WTC11 (cell line): ENCODE measurements at regions of chr6 and their contacts with region 1.

Region 1: DNA sequence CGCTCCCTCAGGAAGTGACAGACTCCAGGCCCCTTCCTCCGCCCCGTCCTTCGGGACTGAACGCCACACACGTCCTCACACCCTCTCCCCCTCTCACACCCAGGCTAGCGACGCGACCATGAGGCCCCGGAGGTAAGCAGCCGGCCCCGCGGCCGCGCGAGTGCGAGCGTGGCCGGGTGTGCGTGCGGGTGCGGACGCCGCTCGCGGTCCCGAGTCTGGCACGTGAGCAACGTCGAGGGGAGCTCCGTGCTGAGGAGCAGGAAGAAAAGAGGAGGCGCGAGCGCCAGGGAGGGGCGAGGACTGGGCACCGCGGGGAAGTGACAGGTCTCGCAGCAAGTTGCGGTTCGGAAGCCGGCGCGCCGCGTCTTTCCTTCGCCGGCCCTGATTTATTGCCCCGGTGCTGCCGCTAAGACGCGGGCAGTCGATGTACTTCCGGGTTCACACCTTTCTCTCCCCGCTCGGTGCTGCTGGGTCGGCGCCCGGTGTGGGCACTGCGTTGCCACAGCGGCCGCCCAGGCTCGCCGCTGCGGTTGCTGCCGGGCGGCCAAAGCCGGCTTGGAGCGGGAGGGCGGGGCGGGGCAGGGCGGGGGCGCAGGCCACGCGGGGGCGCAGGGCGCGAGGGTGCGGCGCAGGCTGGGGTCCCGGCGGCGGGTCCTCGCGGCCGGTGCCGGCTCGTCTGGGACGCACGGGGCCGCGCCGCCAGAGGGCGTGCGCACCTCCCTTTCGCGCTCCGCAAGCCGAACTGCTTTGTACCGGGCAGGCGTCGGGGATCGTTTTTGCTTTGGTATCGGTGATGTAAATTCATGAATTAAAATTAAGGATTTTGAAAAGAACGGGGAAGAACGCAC is 15.8 kb upstream of the LIN28B start:
- DNase-seq: peak; percentile 79
- ATAC-seq: peak; percentile 75
- H3K4me3 Mint-ChIP-seq: peak overlapping the region; percentile 95
- H3K27ac Mint-ChIP-seq: peak overlapping the region; percentile 99
- H3K4me1 Mint-ChIP-seq: peaks cover 34% of the 10 kb centered on the region
- H3K27me3 Mint-ChIP-seq: no peaks in the 10 kb centered on the region
- CTCF ChIP-seq: peak; percentile 65

Region 2: GRCh38 chr6:104705095-104705707 is 235.9 kb before region 1 on chr6:
- CTCF ChIA-PET with region 1: no interaction called
- POLR2A ChIA-PET with region 1: no interaction called
- DNase-seq: no peak
- ATAC-seq: no peak
- H3K4me3 Mint-ChIP-seq: no peak overlapping the region
- H3K27ac Mint-ChIP-seq: no peak overlapping the region
- H3K4me1 Mint-ChIP-seq: peaks cover 9% of the 10 kb centered on the region; the same call in 1 of the 2 replicates
- H3K27me3 Mint-ChIP-seq: no peaks in the 10 kb centered on the region
- CTCF ChIP-seq: no peak

Region 3: DNA sequence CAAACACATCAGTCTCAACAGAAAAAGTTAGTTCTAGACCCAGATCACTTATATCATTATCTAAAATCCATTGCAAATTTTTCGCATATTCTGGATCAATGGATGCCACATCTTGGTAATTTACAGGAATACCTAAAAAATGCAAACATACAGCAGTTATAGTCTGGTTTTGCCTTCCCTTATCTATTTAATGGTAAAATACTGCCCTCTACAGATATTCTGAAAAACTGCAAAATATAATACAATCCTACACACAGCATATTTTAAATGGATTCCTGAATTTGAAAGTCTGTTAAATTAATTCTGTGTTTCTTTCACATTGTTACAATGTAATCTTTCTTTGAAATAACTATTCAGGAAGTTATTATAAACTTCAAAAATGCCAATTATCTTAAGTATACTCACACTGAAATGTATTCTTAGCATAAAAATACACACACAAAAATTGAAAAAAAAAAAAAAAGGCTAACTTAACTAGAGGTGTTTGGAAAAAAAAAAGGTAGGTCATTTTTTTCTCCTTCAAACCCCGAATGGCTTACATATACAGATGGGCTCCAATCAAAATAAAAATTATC is 169.8 kb before region 1 on chr6:
- CTCF ChIA-PET with region 1: no interaction called
- POLR2A ChIA-PET with region 1: no interaction called
- DNase-seq: no peak
- ATAC-seq: peak; percentile 71
- H3K4me3 Mint-ChIP-seq: no peak overlapping the region
- H3K27ac Mint-ChIP-seq: no peak overlapping the region
- H3K4me1 Mint-ChIP-seq: peaks cover 7% of the 10 kb centered on the region
- H3K27me3 Mint-ChIP-seq: no peaks in the 10 kb centered on the region
- CTCF ChIP-seq: peak; percentile 56

Region 4: GRCh38 chr6:104829183-104829958 is 111.7 kb before region 1 on chr6:
- CTCF ChIA-PET with region 1: no interaction called
- POLR2A ChIA-PET with region 1: no interaction called
- DNase-seq: no peak
- ATAC-seq: no peak
- H3K4me3 Mint-ChIP-seq: no peak overlapping the region
- H3K27ac Mint-ChIP-seq: no peak overlapping the region
- H3K4me1 Mint-ChIP-seq: no peaks in the 10 kb centered on the region
- H3K27me3 Mint-ChIP-seq: no peaks in the 10 kb centered on the region
- CTCF ChIP-seq: no peak

Region 5: DNA sequence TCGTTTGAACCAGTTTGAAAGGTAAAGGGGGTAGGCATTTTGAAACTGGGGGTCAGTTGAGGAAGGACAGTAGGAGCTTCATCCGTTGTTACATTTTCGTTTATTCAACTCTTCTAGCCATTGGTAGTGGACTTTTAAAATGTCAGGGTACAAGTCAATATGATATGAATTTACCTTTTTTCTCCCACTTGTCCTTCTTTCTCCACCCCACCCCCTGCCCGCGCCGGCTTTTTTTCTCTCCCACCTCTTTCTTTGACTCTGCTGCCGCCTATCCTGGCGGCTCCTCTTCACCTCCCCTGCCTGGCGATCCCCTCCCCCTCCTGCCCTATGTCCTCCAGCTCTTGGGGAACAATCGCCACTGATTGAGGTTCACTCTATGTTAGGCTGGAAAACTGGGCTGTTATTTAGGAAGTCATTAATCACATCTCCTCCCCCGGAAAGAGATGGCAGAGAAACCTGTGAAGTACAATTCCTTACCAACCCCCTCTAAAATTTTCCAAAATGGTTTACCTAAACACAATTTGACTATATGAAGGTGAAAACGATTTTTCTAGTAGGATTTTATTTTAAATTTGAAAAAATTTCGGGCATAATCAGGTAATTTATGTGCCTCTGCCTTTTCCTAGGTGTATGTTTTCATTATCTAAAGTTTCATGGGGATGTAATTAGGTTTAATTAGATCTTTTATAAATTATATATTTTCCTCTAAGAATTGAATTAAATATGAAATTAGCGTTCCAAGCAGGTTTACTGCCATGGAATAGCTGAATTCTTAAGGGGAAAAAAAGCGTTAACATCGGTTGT is 15.0 kb after region 1 on chr6:
- CTCF ChIA-PET with region 1: interaction called, 12 read pairs
- POLR2A ChIA-PET with region 1: interaction called, 9 read pairs
- DNase-seq: peak; percentile 81
- ATAC-seq: peak; percentile 61
- H3K4me3 Mint-ChIP-seq: peak overlapping the region; percentile 93
- H3K27ac Mint-ChIP-seq: peak overlapping the region; percentile 100
- H3K4me1 Mint-ChIP-seq: peaks cover 39% of the 10 kb centered on the region
- H3K27me3 Mint-ChIP-seq: no peaks in the 10 kb centered on the region
- CTCF ChIP-seq: no peak

Region 6: DNA sequence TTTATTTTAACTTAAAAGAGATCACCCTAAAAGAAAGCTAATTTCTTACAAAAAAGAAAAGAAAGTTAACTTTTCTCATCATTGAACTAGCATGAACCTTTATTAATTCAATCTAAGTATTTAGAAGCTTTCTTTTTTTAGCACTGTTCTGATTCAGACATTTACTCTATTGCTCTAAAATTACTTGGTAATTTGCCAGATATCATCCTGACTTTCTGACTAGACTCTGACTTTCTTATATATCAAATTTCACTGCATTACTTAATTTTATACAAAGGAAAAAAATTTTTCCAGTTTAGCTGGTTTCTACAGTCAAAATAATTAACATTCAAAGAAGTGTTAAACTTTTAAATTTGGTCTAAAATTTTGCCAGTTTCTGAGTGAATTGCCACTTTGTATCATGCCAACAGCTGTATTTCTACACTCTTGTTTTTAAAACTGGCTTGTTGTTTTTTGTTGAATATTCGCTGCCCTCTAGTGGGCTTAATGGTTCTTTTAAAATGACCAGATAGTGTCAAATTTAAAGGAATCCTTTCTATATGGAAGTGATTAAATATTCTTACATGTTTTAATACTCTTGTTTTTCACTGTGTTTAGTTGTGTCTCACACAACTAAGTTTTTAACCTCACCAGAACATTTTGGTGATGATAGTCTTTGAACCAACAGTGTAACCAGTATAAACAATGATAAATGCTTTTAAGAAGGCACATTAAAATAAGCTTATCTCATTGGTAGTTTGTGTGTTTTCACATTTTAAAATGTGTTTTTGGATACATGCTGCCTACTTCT is 136.7 kb after region 1 on chr6:
- CTCF ChIA-PET with region 1: interaction called, 22 read pairs
- POLR2A ChIA-PET with region 1: no interaction called
- DNase-seq: no peak
- ATAC-seq: no peak
- H3K4me3 Mint-ChIP-seq: no peak overlapping the region
- H3K27ac Mint-ChIP-seq: peak overlapping the region; percentile 54; the same call in 1 of the 2 replicates
- H3K4me1 Mint-ChIP-seq: peaks cover 6% of the 10 kb centered on the region; the same call in 1 of the 2 replicates
- H3K27me3 Mint-ChIP-seq: no peaks in the 10 kb centered on the region
- CTCF ChIP-seq: no peak

Region 7: GRCh38 chr6:105164418-105164817 is 223.3 kb after region 1 on chr6:
- CTCF ChIA-PET with region 1: no interaction called
- POLR2A ChIA-PET with region 1: no interaction called
- DNase-seq: no peak
- ATAC-seq: no peak
- H3K4me3 Mint-ChIP-seq: no peak overlapping the region
- H3K27ac Mint-ChIP-seq: no peak overlapping the region
- H3K4me1 Mint-ChIP-seq: peaks cover 11% of the 10 kb centered on the region
- H3K27me3 Mint-ChIP-seq: no peaks in the 10 kb centered on the region
- CTCF ChIP-seq: no peak